Activated CD4-positive, alpha-beta T cell treated with anti-CD3 and anti-CD28 coated beads, Interleukin-2, amount 10 ng/mL, durations not matched to agents 24 days and 14 days (primary cell): ENCODE measurements at regions of chr10 and their contacts with region 1.

Region 1: DNA sequence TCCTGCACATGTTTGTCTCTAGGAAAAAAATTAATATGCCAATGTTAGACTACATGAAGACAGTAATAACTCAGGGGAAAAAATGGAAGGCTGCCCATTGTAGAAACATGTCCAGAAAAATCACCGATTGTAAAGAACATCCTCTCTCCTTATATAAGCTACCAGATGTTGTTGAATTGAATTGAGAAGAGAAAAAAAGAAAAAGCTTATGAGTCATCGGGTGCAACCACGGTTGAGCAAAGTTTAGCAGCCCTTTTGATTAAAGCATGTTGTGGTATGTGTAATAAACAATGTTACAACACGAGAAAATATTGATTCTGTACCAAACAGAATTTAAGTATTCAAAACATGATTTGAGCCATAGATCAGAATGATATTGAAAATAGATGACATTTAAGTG is 102.3 kb upstream of the ARHGAP21 start:
- DNase-seq: no peak
- H3K4me3 Mint-ChIP-seq: peak overlapping the region; percentile 60
- H3K27ac Mint-ChIP-seq: no peak overlapping the region
- H3K4me1 Mint-ChIP-seq: peaks cover 31% of the 10 kb centered on the region
- H3K27me3 Mint-ChIP-seq: no peaks in the 10 kb centered on the region

Region 2: DNA sequence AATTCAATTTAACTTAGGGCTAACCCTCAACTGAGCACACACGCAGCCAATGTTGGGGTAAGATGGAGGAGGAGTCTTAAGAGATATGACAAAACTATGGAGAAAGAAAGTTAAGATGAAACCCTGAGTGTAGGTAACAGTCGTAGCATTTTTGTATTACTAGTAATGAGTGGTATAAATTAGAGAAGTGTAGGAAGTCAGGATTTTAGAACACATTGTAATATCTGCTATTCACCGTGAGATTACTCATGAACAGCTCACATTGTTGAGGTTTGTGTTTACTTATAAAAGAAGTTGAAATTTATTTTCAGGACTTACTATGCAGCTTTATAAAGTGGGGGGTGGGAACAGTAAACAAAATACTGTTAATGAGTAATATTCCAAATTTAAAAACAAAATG is 209.5 kb before region 1 on chr10:
- intact Hi-C with region 1: no loop called
- DNase-seq: no peak
- H3K4me3 Mint-ChIP-seq: no peak overlapping the region
- H3K27ac Mint-ChIP-seq: no peak overlapping the region
- H3K4me1 Mint-ChIP-seq: peaks cover 17% of the 10 kb centered on the region
- H3K27me3 Mint-ChIP-seq: no peaks in the 10 kb centered on the region

Region 3: DNA sequence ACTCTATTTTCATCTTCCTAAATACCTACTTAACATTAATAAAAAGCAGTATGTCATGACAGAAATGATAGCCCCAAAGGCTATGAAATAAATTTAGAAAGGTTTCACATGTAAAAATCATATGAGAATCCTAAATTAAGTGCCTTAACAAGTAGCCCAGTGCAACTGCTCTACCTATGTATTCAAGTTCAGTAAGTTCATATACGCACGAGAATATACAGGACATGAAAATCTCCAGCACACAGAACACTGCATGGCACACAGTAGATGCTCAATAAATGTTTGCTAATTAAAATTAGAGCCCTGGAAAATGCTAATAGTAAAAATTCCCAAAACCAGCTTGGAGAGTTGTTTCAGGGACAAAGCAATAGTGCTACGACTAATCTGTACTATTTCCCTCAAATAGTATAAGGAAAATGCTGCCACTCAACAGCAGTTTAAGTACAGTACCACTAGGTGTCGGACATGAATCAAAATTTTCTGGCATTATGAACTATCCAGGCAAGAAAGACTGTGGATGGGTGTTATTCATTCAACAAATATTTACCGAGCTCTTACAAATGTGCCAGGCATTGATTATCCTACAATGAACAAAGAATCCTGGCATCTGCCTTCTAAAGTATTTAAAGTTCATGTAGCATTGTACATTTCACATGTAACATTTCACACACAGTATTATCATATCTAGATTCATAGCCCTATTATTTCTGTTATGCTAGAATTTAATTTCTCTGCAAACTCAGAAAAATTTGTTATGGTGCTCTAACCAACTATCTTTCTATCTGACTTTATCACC is 183.2 kb before region 1 on chr10:
- intact Hi-C with region 1: loop called (anchors 5 kb)
- DNase-seq: peak; percentile 79
- H3K4me3 Mint-ChIP-seq: no peak overlapping the region
- H3K27ac Mint-ChIP-seq: no peak overlapping the region
- H3K4me1 Mint-ChIP-seq: peaks cover 3% of the 10 kb centered on the region
- H3K27me3 Mint-ChIP-seq: no peaks in the 10 kb centered on the region

Region 4: DNA sequence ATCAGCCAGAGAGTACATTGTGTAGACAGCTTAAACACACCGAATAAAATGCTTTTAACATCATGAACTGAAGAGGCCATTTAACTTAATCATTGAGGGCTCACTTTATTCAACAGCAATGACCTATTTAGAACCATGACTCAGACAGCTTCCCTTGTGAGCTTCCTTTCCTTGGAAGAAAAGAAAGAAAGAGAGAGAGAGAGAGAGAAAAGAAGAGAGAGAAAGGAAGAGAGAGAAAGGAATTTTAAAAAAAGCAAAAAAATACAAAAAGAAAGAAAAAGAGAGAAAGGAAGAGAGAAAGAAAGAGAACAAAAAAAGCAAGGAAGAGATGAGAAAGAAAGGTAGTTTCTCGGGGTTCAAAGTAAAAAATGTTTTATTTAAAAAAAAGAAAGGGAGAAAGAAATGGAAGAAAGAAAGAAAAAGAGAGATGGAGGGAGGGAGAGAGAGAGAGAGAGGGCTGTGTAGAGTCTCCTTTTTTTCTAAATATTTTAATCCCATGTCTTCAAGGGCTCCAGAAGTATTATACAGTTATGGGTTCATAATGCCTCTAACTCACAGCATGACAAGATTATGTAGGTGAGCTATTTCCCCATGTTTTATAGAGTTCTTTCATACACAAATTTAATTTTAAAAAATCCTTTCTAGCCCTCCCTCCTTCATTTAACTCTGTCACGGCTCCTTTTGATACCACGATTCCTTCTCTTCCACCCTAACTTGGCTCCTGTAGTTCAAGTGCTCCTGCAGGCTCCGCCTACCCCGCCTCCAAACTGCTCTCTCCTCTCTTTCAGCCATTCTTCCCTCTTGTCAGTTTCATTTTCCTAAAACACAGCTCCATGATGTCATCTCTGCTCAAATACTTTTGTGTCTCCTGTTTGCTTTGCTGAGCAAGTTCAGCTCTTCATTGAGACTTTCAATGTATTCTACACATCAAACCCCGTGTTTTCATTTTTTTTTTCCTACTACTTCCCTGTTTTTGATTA is 40.9 kb after region 1 on chr10:
- intact Hi-C with region 1: loop called (anchors 1 kb)
- DNase-seq: peak; percentile 67
- H3K4me3 Mint-ChIP-seq: peak overlapping the region; percentile 60
- H3K27ac Mint-ChIP-seq: no peak overlapping the region
- H3K4me1 Mint-ChIP-seq: peaks cover 35% of the 10 kb centered on the region
- H3K27me3 Mint-ChIP-seq: no peaks in the 10 kb centered on the region

Region 5: DNA sequence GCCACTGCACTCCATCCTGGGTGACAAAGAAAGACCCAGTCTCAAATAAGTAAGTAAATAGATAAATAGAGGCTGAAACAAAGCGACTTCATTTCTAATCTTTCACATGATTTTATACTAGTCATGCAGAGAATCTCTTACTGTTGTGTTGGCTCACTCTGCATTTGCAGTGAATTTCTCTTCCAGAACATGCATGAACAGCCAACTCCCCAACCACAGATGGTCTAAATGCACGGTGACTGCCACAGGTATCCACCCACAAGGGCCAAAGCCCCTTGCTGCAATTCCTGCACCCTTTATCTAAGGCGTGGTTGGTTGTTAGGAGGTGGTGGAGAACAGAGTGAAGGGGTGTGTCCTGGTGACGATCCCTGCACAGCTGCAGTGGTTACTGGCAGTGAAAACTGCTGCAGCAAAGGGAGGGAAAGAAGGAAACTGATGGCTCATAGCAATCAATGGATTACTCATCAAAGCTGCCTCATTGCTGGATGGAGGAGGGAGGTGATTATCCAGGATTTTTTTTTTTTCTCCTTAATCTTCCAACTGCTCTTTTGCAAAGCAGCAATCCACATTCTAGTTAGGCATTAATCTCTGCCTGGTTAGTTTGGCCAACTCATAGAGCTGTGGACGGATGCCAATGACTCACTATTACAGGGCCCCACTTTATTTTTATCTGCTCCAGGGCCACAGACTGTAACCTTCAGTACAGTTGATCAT is 75.8 kb after region 1 on chr10:
- intact Hi-C with region 1: loop called (anchors 1 kb)
- DNase-seq: no peak
- H3K4me3 Mint-ChIP-seq: peak overlapping the region; percentile 62
- H3K27ac Mint-ChIP-seq: peak overlapping the region; percentile 85
- H3K4me1 Mint-ChIP-seq: peaks cover 30% of the 10 kb centered on the region
- H3K27me3 Mint-ChIP-seq: no peaks in the 10 kb centered on the region

Region 6: GRCh38 chr10:24947304-24948097 is 121.5 kb after region 1 on chr10:
- intact Hi-C with region 1: loop called (anchors 5 kb)
- DNase-seq: no peak
- H3K4me3 Mint-ChIP-seq: no peak overlapping the region
- H3K27ac Mint-ChIP-seq: no peak overlapping the region
- H3K4me1 Mint-ChIP-seq: peaks cover 14% of the 10 kb centered on the region
- H3K27me3 Mint-ChIP-seq: no peaks in the 10 kb centered on the region